ENCODE measurements at regions of chr7 and their contacts with region 1.

Region 1: DNA sequence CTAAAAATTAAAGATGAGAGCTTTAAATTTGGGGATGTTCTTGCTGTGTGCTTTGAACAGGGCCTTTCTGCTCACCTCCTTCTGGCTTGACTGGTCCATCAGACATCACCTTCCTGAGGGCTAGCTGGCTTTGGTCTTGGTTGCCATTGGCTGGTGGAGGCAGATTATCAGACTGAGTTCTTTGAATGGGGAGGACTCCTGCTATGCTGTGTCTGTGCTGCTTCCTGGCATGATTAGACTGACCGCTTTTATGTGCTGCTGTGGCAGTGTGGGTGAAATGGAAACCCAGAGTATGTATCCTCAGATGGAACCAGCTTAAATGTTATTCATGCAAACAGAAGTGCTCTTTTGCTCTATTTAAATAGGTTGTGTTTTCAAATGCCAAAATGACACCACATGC is 341.6 kb downstream of the PCLO start:
- DNase-seq: no peak
- H3K4me3 ChIP-seq: no peak overlapping the region
- H3K27ac ChIP-seq: no peak overlapping the region
- H3K4me1 ChIP-seq: no peaks in the 10 kb centered on the region
- H3K27me3 ChIP-seq: no peaks in the 10 kb centered on the region
- CTCF ChIP-seq: no peak
- POLR2A ChIP-seq: no peak

Region 2: GRCh38 chr7:82700741-82701140 is 120.3 kb before region 1 on chr7:
- intact Hi-C with region 1: no loop called
- DNase-seq: no peak
- H3K4me3 ChIP-seq: no peak overlapping the region
- H3K27ac ChIP-seq: no peak overlapping the region
- H3K4me1 ChIP-seq: no peaks in the 10 kb centered on the region
- H3K27me3 ChIP-seq: no peaks in the 10 kb centered on the region
- CTCF ChIP-seq: no peak
- POLR2A ChIP-seq: no peak

Region 3: GRCh38 chr7:83173664-83174063 is 352.6 kb after region 1 on chr7:
- intact Hi-C with region 1: loop called in 1 of 2 experiments (anchors 5 kb)
- DNase-seq: no peak
- H3K4me3 ChIP-seq: no peak overlapping the region
- H3K27ac ChIP-seq: no peak overlapping the region
- H3K4me1 ChIP-seq: no peaks in the 10 kb centered on the region
- H3K27me3 ChIP-seq: no peaks in the 10 kb centered on the region
- CTCF ChIP-seq: no peak
- POLR2A ChIP-seq: no peak